GM12878 (cell line): ENCODE measurements at regions of chr9 and their contacts with region 1.

Region 1: DNA sequence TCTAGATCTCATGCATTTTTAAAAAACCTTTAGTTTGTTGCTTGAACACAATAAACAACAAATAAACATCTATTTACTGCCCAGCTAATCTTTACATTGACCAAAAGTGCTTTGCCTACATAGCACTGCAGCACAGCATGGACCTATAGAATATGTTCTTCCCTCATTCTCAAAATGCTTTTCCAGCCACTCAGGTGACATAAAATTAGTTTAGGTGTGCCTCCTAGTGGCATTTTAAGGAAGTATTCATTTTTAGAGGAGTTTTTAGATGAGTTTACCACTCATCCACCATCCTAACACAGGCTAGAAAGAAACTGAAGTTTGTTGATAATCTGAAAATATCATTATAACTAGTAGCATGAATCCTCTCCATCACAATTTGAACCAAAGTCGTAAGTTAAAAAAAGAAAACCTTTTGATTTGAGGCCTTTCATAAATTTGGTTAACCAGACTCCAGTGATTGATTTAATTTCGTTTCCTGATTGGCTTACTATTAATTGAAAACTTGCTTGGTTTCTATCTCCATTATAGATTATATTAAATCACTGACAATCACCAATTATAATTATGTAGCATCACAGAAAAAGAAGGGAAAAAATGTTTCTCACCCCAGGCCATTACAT is 12.6 kb downstream of the PLGRKT start:
- DNase-seq: peak; percentile 30
- ATAC-seq: peak; percentile 77
- H3K4me3 ChIP-seq: no peak overlapping the region
- H3K27ac ChIP-seq: no peak overlapping the region
- H3K4me1 ChIP-seq: no peaks in the 10 kb centered on the region
- H3K27me3 ChIP-seq: no peaks in the 10 kb centered on the region
- CTCF ChIP-seq: peak; percentile 45 to 61 (median 56); a peak in 5 of 6 replicates
- EP300 ChIP-seq: no peak
- POLR2A ChIP-seq: no peak
- RAD21 ChIP-seq: peak; percentile 78

Region 2: GRCh38 chr9:5073701-5074100 is 351.4 kb before region 1 on chr9:
- CTCF ChIA-PET with region 1: interaction called, 4 read pairs
- POLR2A ChIA-PET with region 1: no interaction called
- RAD21 ChIA-PET with region 1: interaction called, 6 read pairs
- SMC1A ChIA-PET with region 1: interaction called, 4 read pairs
- in situ Hi-C with region 1: loop called (anchors 5 kb)
- intact Hi-C with region 1: loop called (anchors 5 kb)
- DNase-seq: no peak
- ATAC-seq: peak; percentile 65
- H3K4me3 ChIP-seq: no peak overlapping the region
- H3K27ac ChIP-seq: no peak overlapping the region
- H3K4me1 ChIP-seq: peaks cover 5% of the 10 kb centered on the region; the same call in 1 of the 2 replicates
- H3K27me3 ChIP-seq: no peaks in the 10 kb centered on the region
- CTCF ChIP-seq: peak in 1 of 3 experiments; percentile 49; a peak in 2 of 6 replicates
- EP300 ChIP-seq: no peak
- POLR2A ChIP-seq: no peak
- RAD21 ChIP-seq: peak; percentile 39; the same call in 1 of the 2 replicates

Region 3: DNA sequence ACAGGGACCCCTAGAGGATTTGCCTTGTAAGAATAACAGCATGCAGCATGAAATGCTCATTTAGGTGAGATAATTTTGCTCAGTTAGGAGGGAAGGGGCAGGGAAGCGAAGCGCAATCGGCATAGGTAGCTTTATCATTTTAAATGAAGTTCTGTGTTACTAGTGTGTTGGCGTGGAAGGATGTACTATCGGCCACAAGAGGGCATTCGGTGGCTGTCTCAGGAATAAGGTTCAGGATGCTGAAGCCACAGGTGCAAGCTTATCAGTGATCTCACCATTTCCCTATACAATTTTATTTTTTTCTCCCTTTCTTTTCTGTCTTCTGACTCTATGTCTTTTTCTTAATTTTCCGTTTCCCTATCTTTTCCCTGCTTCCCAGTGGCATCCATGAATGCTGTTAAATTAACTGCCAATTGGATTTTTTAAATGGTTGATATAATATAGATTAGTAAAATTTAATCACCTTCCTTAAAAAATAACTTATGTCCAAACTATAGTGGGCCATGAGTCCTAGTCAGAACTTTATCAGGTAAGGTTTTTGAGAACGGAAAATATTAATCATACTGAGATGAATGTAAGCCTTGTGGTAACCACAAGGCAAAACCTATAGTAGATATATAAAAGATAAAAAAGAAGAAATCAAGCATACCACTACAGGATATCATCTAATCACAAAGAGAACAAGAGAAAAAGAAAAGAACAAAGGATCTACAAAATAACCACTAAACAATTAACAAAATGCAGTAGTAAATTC is 238.5 kb before region 1 on chr9:
- CTCF ChIA-PET with region 1: interaction called, 3 read pairs
- POLR2A ChIA-PET with region 1: no interaction called
- RAD21 ChIA-PET with region 1: interaction called, 5 read pairs
- SMC1A ChIA-PET with region 1: interaction called, 7 read pairs
- in situ Hi-C with region 1: no loop called
- intact Hi-C with region 1: loop called (anchors 10 kb)
- DNase-seq: no peak
- ATAC-seq: peak; percentile 46
- H3K4me3 ChIP-seq: no peak overlapping the region
- H3K27ac ChIP-seq: no peak overlapping the region
- H3K4me1 ChIP-seq: no peaks in the 10 kb centered on the region
- H3K27me3 ChIP-seq: no peaks in the 10 kb centered on the region
- CTCF ChIP-seq: peak in 2 of 3 experiments; percentile 19 to 37; a peak in 2 of 6 replicates
- EP300 ChIP-seq: no peak
- POLR2A ChIP-seq: no peak
- RAD21 ChIP-seq: peak; percentile 37